ENCODE measurements at regions of chr11 and their contacts with region 1.

Region 1: GRCh38 chr11:46410021-46410420 is 18.4 kb upstream of the CHRM4 start:
- DNase-seq: no peak
- H3K4me3 ChIP-seq: no peak overlapping the region
- H3K27me3 ChIP-seq: no peaks in the 10 kb centered on the region
- CTCF ChIP-seq: no peak

Region 2: GRCh38 chr11:46421257-46421880 is 11.3 kb after region 1 on chr11:
- CTCF ChIA-PET with region 1: interaction called, 13 read pairs
- POLR2A ChIA-PET with region 1: no interaction called
- DNase-seq: no peak
- H3K4me3 ChIP-seq: no peak overlapping the region
- H3K27me3 ChIP-seq: no peaks in the 10 kb centered on the region
- CTCF ChIP-seq: no peak

Region 3: GRCh38 chr11:46499821-46500220 is 89.8 kb after region 1 on chr11:
- CTCF ChIA-PET with region 1: no interaction called
- POLR2A ChIA-PET with region 1: no interaction called
- DNase-seq: no peak
- H3K4me3 ChIP-seq: no peak overlapping the region
- H3K27me3 ChIP-seq: no peaks in the 10 kb centered on the region; the same call in 1 of the 2 replicates
- CTCF ChIP-seq: no peak

Region 4: DNA sequence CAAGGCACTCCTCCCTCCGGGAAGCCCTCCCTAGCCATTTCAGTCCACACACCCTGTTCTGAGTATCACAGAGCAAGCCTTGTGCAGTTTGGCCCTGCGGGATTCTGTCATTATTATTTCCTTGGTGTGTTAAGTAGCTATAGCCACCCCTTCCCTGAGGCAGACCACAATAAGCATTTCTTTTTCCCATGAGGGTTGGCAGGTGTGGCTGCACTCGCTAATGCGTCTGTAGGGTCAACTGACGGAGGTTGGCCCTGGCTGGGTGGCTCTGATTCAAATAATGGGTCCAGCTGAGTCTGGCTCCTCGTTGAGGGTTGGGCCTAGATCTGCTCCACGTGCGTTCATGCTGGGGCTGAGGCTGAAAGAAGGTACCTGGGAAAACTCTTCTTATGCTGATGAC is 314.1 kb after region 1 on chr11:
- CTCF ChIA-PET with region 1: no interaction called
- POLR2A ChIA-PET with region 1: no interaction called
- DNase-seq: no peak
- H3K4me3 ChIP-seq: no peak overlapping the region
- H3K27me3 ChIP-seq: no peaks in the 10 kb centered on the region; the same call in 1 of the 2 replicates
- CTCF ChIP-seq: no peak

Measured in BJ (cell line).